Prostate gland (tissue), 2 donors: ENCODE measurements at regions of chr20 and their contacts with region 1.

Region 1: GRCh38 chr20:50120897-50121693 is 8.1 kb upstream of the UBE2V1 start:
- DNase-seq: peak; percentile 68
- H3K4me3 ChIP-seq: no peak overlapping the region
- H3K27ac ChIP-seq: peak overlapping the region in 1 of 2 donors; percentile 23
- H3K4me1 ChIP-seq: peaks cover 4% of the 10 kb centered on the region
- H3K27me3 ChIP-seq: no peaks in the 10 kb centered on the region
- CTCF ChIP-seq: peak; percentile 78 to 97 (median 94)
- POLR2A ChIP-seq: no peak

Region 2: DNA sequence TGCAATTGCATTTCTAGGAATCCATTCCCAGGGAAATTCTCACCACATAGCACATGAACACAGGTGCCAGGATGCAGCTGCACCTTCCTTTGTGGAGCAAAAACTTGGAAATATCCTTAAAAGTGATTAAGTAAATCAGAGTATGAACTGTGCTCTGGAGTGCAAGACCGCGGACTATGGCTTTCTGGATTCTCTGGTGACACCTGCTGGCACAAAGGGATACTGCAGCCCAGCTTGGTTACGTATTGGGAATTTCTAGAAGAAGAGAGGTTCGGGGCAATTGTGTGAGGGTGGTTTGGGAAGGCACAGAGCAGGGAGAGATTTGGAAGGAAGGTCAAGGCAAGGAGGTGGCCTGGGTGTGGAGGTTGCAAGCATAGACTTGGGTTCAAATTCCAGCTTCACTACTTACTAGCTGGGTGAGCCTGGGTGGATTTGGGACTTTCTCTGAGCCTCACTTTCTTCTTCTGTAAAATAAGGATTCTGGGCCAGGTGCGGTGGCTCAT is 48.3 kb after region 1 on chr20:
- intact Hi-C with region 1: loop called (anchors 1 kb)
- DNase-seq: peak; percentile 81
- H3K4me3 ChIP-seq: no peak overlapping the region
- H3K27ac ChIP-seq: no peak overlapping the region
- H3K4me1 ChIP-seq: peaks cover 3% of the 10 kb centered on the region
- H3K27me3 ChIP-seq: no peaks in the 10 kb centered on the region
- CTCF ChIP-seq: peak; percentile 85 to 98 (median 96)
- POLR2A ChIP-seq: no peak

Region 3: GRCh38 chr20:50588034-50588611 is 467.0 kb after region 1 on chr20:
- intact Hi-C with region 1: loop called (anchors 10 kb)
- DNase-seq: peak; percentile 61
- H3K4me3 ChIP-seq: no peak overlapping the region
- H3K27ac ChIP-seq: peak overlapping the region in 1 of 2 donors; percentile 7
- H3K4me1 ChIP-seq: peaks cover 14% of the 10 kb centered on the region
- H3K27me3 ChIP-seq: no peaks in the 10 kb centered on the region
- CTCF ChIP-seq: peak; percentile 68 to 89 (median 81)
- POLR2A ChIP-seq: no peak